Naive thymus-derived CD4-positive, alpha-beta T cell (primary cell): ENCODE measurements at regions of chr6 and their contacts with region 1.

Region 1: DNA sequence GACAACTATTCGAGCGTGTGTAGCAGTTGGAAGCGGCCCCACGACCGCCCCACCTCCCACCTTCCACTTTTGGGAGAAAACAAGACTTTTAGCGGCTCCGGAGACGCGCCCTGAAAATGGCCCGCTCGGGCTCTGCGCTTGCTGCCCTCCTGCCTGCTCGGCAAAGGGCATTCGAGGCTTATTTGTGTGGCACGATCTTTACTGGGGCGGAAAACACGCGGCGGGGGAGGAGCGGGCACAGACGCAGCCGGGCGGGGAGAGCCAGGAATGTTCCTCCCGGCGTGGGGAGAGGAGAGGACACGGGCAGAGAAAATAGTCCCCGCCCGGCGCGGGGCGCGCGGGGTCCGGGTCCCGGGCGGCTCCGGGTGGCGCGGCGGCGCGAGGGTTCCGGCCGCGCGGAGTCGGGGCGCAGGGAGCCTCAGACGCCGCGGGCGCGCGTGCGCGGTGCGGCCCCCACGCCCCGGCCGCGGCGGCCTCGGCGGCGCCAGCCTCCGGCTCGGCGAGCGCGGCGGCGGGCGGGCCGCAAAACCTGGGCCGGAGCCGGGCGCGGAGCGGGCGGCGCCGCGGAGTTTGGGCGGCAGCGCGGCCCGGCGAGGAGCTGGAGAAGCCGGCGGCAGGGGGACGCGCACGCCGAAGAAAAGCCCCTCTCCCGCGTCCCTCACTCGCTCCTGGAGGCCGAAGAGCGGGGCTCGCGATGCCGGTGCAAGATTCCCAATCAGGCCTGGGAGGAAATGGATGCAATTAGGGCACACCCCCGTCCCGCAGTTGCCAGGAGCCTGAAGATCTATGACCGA is 90.0 kb upstream of the ARID1B start:
- DNase-seq: peak in 8 of 9 donors; percentile 77 to 91 (median 87)
- ATAC-seq: peak; percentile 93
- H3K4me3 ChIP-seq: peak overlapping the region; percentile 89
- H3K4me3 Mint-ChIP-seq: peak overlapping the region; percentile 81 to 96 (median 90)
- H3K27ac ChIP-seq: peak overlapping the region; percentile 100
- H3K27ac Mint-ChIP-seq: peak overlapping the region; percentile 87 to 99 (median 95)
- H3K4me1 ChIP-seq: peaks cover 4 to 17% of the 10 kb centered on the region in 2 donors
- H3K4me1 Mint-ChIP-seq: peaks cover 10 to 28% (median 20%) of the 10 kb centered on the region in 7 donors
- H3K27me3 ChIP-seq: no peaks in the 10 kb centered on the region
- H3K27me3 Mint-ChIP-seq: peaks cover 0 to 27% (median 0%) of the 10 kb centered on the region in 5 donors

Region 2: GRCh38 chr6:155314092-155314772 is 1373.0 kb before region 1 on chr6 and contains the start of gene TFB1M:
- CTCF ChIA-PET with region 1: no interaction called
- POLR2A ChIA-PET with region 1: interaction called, 8 read pairs
- intact Hi-C with region 1: loop called (anchors 1 to 2 kb)
- DNase-seq: peak; percentile 84 to 98 (median 94)
- ATAC-seq: peak; percentile 96
- H3K4me3 ChIP-seq: peak within 1 kb of the TSS; percentile 86
- H3K4me3 Mint-ChIP-seq: peak within 1 kb of the TSS; percentile 80 to 98 (median 96)
- H3K27ac ChIP-seq: peak within 1 kb of the TSS; percentile 90
- H3K27ac Mint-ChIP-seq: peak within 1 kb of the TSS; percentile 84 to 97 (median 93)
- H3K4me1 ChIP-seq: peaks cover 3 to 5% of the 10 kb centered on the region in 2 donors
- H3K4me1 Mint-ChIP-seq: peaks cover 10 to 48% (median 41%) of the 10 kb centered on the region in 7 donors
- H3K27me3 ChIP-seq: no peaks in the 10 kb centered on the region
- H3K27me3 Mint-ChIP-seq: no peaks in the 10 kb centered on the region
- total RNA-seq, gene TFB1M: 20.5 to 45.4 (median 29.7) TPM

Region 3: GRCh38 chr6:156378853-156379252 is 308.3 kb before region 1 on chr6:
- CTCF ChIA-PET with region 1: no interaction called
- POLR2A ChIA-PET with region 1: interaction called, 3 read pairs
- intact Hi-C with region 1: loop called in 1 of 2 experiments (anchors 1 kb)
- DNase-seq: peak in 6 of 9 donors; percentile 19 to 48 (median 36)
- ATAC-seq: peak; percentile 74
- H3K4me3 ChIP-seq: no peak overlapping the region
- H3K4me3 Mint-ChIP-seq: no peak overlapping the region
- H3K27ac ChIP-seq: no peak overlapping the region
- H3K27ac Mint-ChIP-seq: peak overlapping the region in 6 of 9 donors; percentile 8 to 67 (median 36)
- H3K4me1 ChIP-seq: no peaks in the 10 kb centered on the region
- H3K4me1 Mint-ChIP-seq: peaks cover 0 to 21% (median 0%) of the 10 kb centered on the region in 7 donors
- H3K27me3 ChIP-seq: no peaks in the 10 kb centered on the region
- H3K27me3 Mint-ChIP-seq: peaks cover 0 to 4% (median 0%) of the 10 kb centered on the region in 5 donors

Region 4: DNA sequence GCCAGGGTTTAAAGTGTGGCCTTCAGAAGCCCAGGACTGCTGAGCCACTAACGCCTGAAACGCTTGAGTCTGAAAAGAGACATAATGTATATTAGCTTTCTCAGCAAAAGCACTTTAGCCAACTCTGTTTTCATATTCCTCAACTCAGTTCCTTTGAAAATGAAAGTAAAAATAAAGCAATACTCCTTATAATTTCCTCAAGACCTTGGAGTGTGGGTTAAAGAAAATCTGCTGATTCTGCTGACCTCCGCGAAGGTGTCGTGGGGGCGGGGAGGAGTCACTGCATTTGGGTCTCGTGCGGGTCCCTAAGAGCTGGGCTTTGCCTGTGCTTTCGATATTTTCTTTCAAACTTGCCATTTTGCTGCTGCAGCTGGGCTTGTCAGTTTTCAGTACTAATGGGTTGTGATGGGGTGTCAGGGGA is 52.2 kb before region 1 on chr6:
- CTCF ChIA-PET with region 1: interaction called, 3 read pairs
- POLR2A ChIA-PET with region 1: no interaction called
- intact Hi-C with region 1: loop called in 1 of 2 experiments (anchors 1 kb)
- DNase-seq: no peak
- ATAC-seq: no peak
- H3K4me3 ChIP-seq: no peak overlapping the region
- H3K4me3 Mint-ChIP-seq: peak overlapping the region; percentile 29 to 78 (median 54)
- H3K27ac ChIP-seq: no peak overlapping the region
- H3K27ac Mint-ChIP-seq: peak overlapping the region in 5 of 9 donors; percentile 19 to 61 (median 40)
- H3K4me1 ChIP-seq: peaks cover 0 to 21% of the 10 kb centered on the region in 2 donors
- H3K4me1 Mint-ChIP-seq: peaks cover 14 to 34% (median 26%) of the 10 kb centered on the region in 7 donors
- H3K27me3 ChIP-seq: no peaks in the 10 kb centered on the region
- H3K27me3 Mint-ChIP-seq: no peaks in the 10 kb centered on the region

Region 5: DNA sequence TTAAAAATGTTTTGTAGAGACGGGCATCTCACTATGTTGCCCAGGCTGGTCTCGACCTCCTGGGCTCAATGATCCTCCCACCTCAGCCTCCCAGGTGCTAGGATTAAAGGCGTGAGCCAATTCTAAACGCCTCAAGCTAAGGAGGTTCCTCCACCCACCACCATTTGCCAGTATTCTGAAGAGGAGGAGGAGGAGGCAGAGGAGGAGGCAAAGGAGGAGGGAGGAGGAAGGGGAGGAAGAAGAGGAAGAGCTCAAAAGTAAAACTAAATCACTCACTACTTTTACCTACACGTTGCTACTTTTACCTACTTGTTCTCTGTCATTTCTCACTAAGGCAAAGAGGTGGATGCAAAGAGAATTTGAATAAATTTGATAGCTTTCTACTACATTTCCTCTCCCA is 26.4 kb after region 1 on chr6:
- CTCF ChIA-PET with region 1: no interaction called
- POLR2A ChIA-PET with region 1: no interaction called
- intact Hi-C with region 1: no loop called
- DNase-seq: no peak
- ATAC-seq: no peak
- H3K4me3 ChIP-seq: no peak overlapping the region
- H3K4me3 Mint-ChIP-seq: no peak overlapping the region
- H3K27ac ChIP-seq: no peak overlapping the region
- H3K27ac Mint-ChIP-seq: no peak overlapping the region
- H3K4me1 ChIP-seq: no peaks in the 10 kb centered on the region
- H3K4me1 Mint-ChIP-seq: peaks cover 0 to 5% (median 0%) of the 10 kb centered on the region in 7 donors
- H3K27me3 ChIP-seq: no peaks in the 10 kb centered on the region
- H3K27me3 Mint-ChIP-seq: peaks cover 0 to 36% (median 3%) of the 10 kb centered on the region in 5 donors

Region 6: GRCh38 chr6:156828280-156828703 is 141.1 kb after region 1 on chr6:
- CTCF ChIA-PET with region 1: no interaction called
- POLR2A ChIA-PET with region 1: no interaction called
- intact Hi-C with region 1: no loop called
- DNase-seq: no peak
- ATAC-seq: peak; percentile 40
- H3K4me3 ChIP-seq: no peak overlapping the region
- H3K4me3 Mint-ChIP-seq: peak overlapping the region in 1 of 10 donors; percentile 18
- H3K27ac ChIP-seq: no peak overlapping the region
- H3K27ac Mint-ChIP-seq: peak overlapping the region in 1 of 9 donors; percentile 12
- H3K4me1 ChIP-seq: peaks cover 11 to 23% of the 10 kb centered on the region in 2 donors
- H3K4me1 Mint-ChIP-seq: peaks cover 28 to 91% (median 83%) of the 10 kb centered on the region in 7 donors
- H3K27me3 ChIP-seq: no peaks in the 10 kb centered on the region
- H3K27me3 Mint-ChIP-seq: no peaks in the 10 kb centered on the region

Region 7: DNA sequence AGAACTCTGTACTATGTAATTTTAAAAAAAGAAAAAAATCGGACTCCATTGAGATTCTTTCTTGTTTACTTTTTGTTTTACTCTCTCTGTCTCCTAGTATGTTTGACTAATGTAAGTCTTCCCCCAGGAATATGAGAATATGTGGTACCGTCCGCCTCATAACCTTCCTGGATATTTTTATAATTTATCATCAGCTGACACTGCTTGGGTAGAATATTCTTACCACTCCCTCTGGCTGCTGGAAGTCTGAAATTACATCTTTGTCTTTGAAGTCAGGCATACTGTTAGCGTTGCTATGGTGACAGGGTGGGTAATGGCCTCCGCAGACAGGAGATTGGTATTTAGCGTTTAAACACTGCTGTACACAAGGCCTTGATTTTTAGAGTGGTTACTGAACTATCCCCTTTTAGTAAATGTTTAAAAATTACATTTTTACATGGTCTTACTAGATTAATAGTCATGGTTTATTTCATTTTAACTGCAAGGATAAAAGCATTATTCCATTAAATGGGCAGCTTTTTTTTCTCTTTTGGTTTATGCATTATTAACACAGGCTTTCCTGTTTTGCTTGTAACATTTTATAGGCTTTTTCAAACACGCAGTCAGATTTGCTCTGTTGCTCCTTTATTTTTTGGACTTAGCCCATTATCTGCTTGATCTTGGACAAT is 266.4 kb after region 1 on chr6:
- CTCF ChIA-PET with region 1: interaction called, 3 read pairs
- POLR2A ChIA-PET with region 1: no interaction called
- intact Hi-C with region 1: loop called in 1 of 2 experiments (anchors 1 kb)
- DNase-seq: peak in 7 of 9 donors; percentile 67 to 85 (median 82)
- ATAC-seq: peak; percentile 95
- H3K4me3 ChIP-seq: no peak overlapping the region
- H3K4me3 Mint-ChIP-seq: peak overlapping the region in 5 of 10 donors; percentile 10 to 51 (median 37)
- H3K27ac ChIP-seq: no peak overlapping the region
- H3K27ac Mint-ChIP-seq: peak overlapping the region in 8 of 9 donors; percentile 27 to 83 (median 51)
- H3K4me1 ChIP-seq: peaks cover 15 to 20% of the 10 kb centered on the region in 2 donors
- H3K4me1 Mint-ChIP-seq: peaks cover 41 to 84% (median 77%) of the 10 kb centered on the region in 7 donors
- H3K27me3 ChIP-seq: no peaks in the 10 kb centered on the region
- H3K27me3 Mint-ChIP-seq: no peaks in the 10 kb centered on the region

Region 8: GRCh38 chr6:158231551-158232315 is 1544.5 kb after region 1 on chr6:
- CTCF ChIA-PET with region 1: no interaction called
- POLR2A ChIA-PET with region 1: no interaction called
- intact Hi-C with region 1: loop called in 1 of 2 experiments (anchors 10 kb)
- DNase-seq: peak; percentile 57 to 84 (median 71)
- ATAC-seq: peak; percentile 86
- H3K4me3 ChIP-seq: peak overlapping the region; percentile 62
- H3K4me3 Mint-ChIP-seq: peak overlapping the region; percentile 85 to 96 (median 92)
- H3K27ac ChIP-seq: peak overlapping the region; percentile 77
- H3K27ac Mint-ChIP-seq: peak overlapping the region; percentile 86 to 94 (median 89)
- H3K4me1 ChIP-seq: peaks cover 6 to 18% of the 10 kb centered on the region in 2 donors
- H3K4me1 Mint-ChIP-seq: peaks cover 22 to 44% (median 38%) of the 10 kb centered on the region in 7 donors
- H3K27me3 ChIP-seq: no peaks in the 10 kb centered on the region
- H3K27me3 Mint-ChIP-seq: peaks cover 0 to 14% (median 0%) of the 10 kb centered on the region in 5 donors